ENCODE measurements at regions of chr11 and their contacts with region 1.

Region 1: GRCh38 chr11:76734456-76735420 is 48.4 kb upstream of the TSKU start:
- DNase-seq: peak in 1 of 4 donors; percentile 29
- ATAC-seq: no peak
- H3K4me3 ChIP-seq: no peak overlapping the region
- H3K27ac ChIP-seq: no peak overlapping the region
- H3K4me1 ChIP-seq: peaks cover 0 to 5% of the 10 kb centered on the region in 2 donors
- H3K27me3 ChIP-seq: no peaks in the 10 kb centered on the region
- CTCF ChIP-seq: no peak

Region 2: GRCh38 chr11:76501526-76502210 is 233.1 kb before region 1 on chr11:
- intact Hi-C with region 1: no loop called
- DNase-seq: no peak
- ATAC-seq: no peak
- H3K4me3 ChIP-seq: no peak overlapping the region
- H3K27ac ChIP-seq: no peak overlapping the region
- H3K4me1 ChIP-seq: no peaks in the 10 kb centered on the region
- H3K27me3 ChIP-seq: no peaks in the 10 kb centered on the region
- CTCF ChIP-seq: no peak

Region 3: DNA sequence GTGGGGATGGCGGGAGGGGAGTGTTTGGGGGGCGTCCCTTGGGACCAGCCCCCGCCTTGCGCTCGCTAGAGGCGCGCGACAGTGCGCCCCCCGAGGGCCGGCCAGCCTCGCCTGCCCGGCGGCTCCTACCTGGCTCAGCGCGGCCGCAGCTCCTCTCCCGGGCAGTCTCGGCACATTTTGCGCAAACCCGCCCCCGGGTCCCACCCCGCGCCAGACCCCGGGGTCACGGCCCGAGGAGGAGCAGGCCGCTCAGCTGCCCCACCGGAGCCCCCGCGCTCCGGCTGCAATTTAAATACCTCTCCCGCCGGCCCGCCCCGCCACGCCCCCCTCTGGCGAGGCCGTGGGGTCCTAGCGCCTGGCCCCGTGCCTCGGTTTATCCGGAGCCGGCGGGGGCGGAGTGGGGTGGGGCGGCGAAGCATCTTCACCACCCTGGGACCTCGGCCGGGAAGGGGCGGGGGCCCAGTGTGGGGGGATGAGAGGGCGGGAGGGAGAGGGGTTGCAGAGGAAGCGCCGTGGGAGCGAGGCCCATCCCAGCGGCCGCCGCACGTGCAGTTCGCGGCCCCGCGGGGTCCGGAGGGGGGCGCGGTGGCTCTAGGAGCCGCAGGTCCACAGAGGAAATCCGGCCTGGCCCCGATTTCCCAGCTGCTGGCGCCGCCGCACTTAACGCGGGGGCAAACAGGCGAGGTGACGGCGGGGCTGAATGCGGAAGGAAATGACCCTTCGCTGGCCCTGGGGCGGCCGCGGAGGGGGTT is 64.1 kb before region 1 on chr11 and contains the start of gene LRRC32:
- intact Hi-C with region 1: no loop called
- DNase-seq: peak in 3 of 4 donors; percentile 63 to 89 (median 69)
- ATAC-seq: peak; percentile 61
- H3K4me3 ChIP-seq: peak within 1 kb of the TSS; percentile 51 to 52
- H3K27ac ChIP-seq: peak within 1 kb of the TSS; percentile 74 to 77
- H3K4me1 ChIP-seq: peaks cover 8 to 51% of the 10 kb centered on the region in 2 donors
- H3K27me3 ChIP-seq: peaks cover 10 to 47% of the 10 kb centered on the region in 2 donors
- CTCF ChIP-seq: no peak
- polyA plus RNA-seq, gene LRRC32: 40.0 to 47.9 (median 45.0) TPM

Region 4: DNA sequence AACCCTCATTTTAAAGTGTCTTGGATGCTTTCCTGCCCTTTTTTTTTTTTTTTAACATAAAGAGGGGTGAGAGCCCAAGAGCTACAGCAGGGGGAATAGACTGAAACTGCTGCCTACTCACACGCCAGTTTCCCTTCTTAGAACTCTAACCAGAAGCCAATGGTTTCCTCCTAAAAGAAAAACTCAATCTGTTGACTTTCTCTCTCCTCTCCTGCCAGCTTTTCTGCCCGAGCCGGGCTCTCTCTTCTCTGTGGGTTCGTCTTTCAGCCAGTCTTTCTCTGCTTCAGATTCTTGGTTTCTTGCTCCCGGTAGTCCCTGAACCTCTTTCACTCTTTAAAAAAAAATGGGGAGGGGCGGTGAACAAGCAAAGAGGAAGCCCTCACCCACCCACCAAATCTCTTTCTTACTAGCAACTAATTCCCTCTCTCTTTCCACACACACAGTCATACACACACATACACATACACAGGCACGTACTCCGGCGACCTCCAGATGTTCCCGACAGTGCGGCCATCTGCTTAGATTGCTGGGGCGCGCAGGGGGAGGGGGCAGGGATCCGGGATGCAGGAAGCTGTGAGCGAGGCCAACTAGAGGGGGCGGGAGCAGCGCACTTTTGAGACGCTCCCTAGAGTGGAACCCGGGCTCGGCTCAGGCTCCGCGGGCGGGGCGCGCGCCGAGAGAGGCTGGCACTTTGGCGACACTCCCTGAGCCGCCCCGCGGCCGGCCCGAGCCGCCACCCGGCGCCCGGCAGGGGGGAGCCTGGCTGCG is 48.0 kb after region 1 on chr11:
- intact Hi-C with region 1: loop called in 1 of 2 experiments (anchors 10 kb)
- DNase-seq: peak; percentile 85 to 97 (median 92)
- ATAC-seq: peak; percentile 87
- H3K4me3 ChIP-seq: peak overlapping the region; percentile 63 to 69
- H3K27ac ChIP-seq: peak overlapping the region; percentile 69 to 81
- H3K4me1 ChIP-seq: peaks cover 0 to 22% of the 10 kb centered on the region in 2 donors
- H3K27me3 ChIP-seq: peaks cover 0 to 51% of the 10 kb centered on the region in 2 donors
- CTCF ChIP-seq: no peak

Region 5: DNA sequence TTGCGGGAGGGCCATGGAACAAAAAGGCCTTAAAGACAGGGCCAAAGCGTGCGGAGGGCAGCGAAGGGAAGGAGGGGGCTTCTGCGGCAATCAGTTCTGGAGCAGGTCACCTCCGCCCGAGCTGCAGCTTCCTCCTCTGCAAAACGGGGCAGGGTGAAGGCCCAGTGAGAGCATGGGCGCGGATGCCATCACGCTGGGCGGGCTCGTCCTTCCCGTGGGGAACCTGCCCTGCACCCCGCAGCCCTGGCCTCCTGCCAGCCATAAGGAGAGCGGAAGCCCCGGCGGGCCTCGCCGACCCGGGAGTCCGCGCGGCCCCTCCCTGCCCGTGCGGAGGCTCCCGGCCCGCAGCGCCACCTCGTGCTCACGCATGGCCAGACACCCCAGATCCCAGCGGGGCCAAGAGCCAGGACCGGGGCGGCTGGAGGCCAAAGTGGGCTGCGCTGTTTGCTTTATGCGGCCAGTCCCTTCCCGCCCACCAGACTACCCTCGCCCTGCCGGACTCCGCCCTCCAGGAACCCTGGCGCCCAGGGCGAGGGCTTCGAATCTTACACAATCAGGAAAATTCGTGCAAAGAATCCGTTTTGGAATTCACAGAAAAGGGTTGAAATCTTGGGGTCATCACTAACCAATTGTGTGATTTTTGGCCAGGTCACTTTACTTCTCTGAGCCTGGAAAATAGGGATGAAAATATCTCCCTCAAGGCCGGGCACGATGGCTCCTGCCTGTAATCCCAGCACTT is 64.5 kb after region 1 on chr11:
- intact Hi-C with region 1: loop called in 1 of 2 experiments (anchors 5 kb)
- DNase-seq: peak; percentile 81 to 95 (median 86)
- ATAC-seq: peak; percentile 95
- H3K4me3 ChIP-seq: peak overlapping the region in 1 of 2 donors; percentile 19
- H3K27ac ChIP-seq: peak overlapping the region in 1 of 2 donors; percentile 36
- H3K4me1 ChIP-seq: peaks cover 5 to 28% of the 10 kb centered on the region in 2 donors
- H3K27me3 ChIP-seq: no peaks in the 10 kb centered on the region
- CTCF ChIP-seq: peak; percentile 91 to 92

Region 6: DNA sequence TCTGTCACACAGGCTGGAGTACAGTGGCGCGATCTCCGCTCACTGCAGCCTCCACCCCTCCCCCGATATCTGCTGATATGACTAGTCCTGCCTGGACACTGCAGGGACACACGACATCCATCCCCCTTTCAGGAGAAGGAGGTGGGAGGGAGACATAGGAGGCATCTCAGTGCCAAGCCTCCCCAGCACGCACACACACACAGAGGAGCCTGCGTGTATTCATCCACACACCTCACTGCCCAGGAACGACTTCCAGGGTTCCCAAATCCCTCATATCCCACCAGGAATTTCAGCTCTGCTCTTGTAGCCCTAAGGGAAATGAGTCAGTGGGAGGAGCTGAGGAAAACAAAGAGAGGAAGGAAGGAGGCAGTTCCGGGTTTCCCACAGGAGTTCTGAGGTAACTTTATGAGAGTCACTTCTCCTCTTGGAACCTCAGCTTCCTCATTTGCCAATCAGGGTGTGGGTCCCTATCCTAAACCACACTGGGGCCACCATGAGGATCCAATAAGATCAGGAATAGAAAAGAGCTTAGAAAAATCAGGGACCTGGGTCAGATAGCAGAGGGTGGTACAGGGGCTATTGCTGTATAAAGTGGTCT is 88.8 kb after region 1 on chr11:
- intact Hi-C with region 1: no loop called
- DNase-seq: no peak
- ATAC-seq: peak; percentile 71
- H3K4me3 ChIP-seq: no peak overlapping the region
- H3K27ac ChIP-seq: peak overlapping the region; percentile 70 to 82
- H3K4me1 ChIP-seq: peaks cover 0 to 34% of the 10 kb centered on the region in 2 donors
- H3K27me3 ChIP-seq: no peaks in the 10 kb centered on the region
- CTCF ChIP-seq: no peak

Region 7: GRCh38 chr11:76888989-76889388 is 154.3 kb after region 1 on chr11:
- intact Hi-C with region 1: no loop called
- DNase-seq: no peak
- ATAC-seq: no peak
- H3K4me3 ChIP-seq: no peak overlapping the region
- H3K27ac ChIP-seq: no peak overlapping the region
- H3K4me1 ChIP-seq: peaks cover 0 to 35% of the 10 kb centered on the region in 2 donors
- H3K27me3 ChIP-seq: no peaks in the 10 kb centered on the region
- CTCF ChIP-seq: no peak